Caco-2 (cell line): ENCODE measurements at regions of chr11 and their contacts with region 1.

Region 1: GRCh38 chr11:73625696-73626318 is 20.6 kb upstream of the PLEKHB1 start:
- DNase-seq: peak; percentile 86 to 92
- H3K4me3 ChIP-seq: no peak overlapping the region
- H3K4me3 Mint-ChIP-seq: peak overlapping the region; percentile 66
- H3K27ac Mint-ChIP-seq: peak overlapping the region; percentile 53
- H3K4me1 ChIP-seq: peaks cover 21% of the 10 kb centered on the region
- H3K4me1 Mint-ChIP-seq: peaks cover 24% of the 10 kb centered on the region
- H3K27me3 ChIP-seq: no peaks in the 10 kb centered on the region
- H3K27me3 Mint-ChIP-seq: peaks cover 5% of the 10 kb centered on the region
- CTCF ChIP-seq: peak; percentile 98 to 99

Region 2: DNA sequence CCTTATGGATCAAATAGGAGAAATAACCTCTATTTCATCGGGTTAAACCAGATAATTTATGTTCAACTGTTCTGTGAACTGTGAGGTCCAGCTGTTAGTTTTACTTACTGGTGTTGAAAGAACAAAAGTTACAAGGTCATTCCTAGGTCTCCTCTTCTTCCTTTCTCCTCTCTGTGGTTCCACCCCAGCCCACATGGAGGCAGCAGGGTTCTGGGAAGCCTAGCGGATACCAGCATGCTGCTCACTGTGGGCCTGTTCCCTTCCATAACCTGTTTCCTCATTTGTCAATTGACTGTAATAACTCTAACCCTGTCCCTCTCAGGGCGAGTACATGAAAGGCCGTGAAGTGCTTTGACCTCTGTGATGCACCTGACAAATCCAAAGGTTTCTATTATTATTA is 221.8 kb before region 1 on chr11:
- CTCF ChIA-PET with region 1: interaction called, 10 read pairs
- POLR2A ChIA-PET with region 1: no interaction called
- intact Hi-C with region 1: no loop called
- DNase-seq: peak; percentile 81 to 85
- H3K4me3 ChIP-seq: no peak overlapping the region
- H3K4me3 Mint-ChIP-seq: no peak overlapping the region
- H3K27ac Mint-ChIP-seq: no peak overlapping the region
- H3K4me1 ChIP-seq: no peaks in the 10 kb centered on the region
- H3K4me1 Mint-ChIP-seq: no peaks in the 10 kb centered on the region
- H3K27me3 ChIP-seq: no peaks in the 10 kb centered on the region
- H3K27me3 Mint-ChIP-seq: no peaks in the 10 kb centered on the region
- CTCF ChIP-seq: peak; percentile 71 to 93

Region 3: GRCh38 chr11:73597956-73598718 is 27.7 kb before region 1 on chr11 and contains the start of gene FAM168A:
- CTCF ChIA-PET with region 1: interaction called, 16 read pairs
- POLR2A ChIA-PET with region 1: no interaction called
- intact Hi-C with region 1: loop called (anchors 2 kb)
- DNase-seq: peak; percentile 98 to 99
- H3K4me3 ChIP-seq: peak within 1 kb of the TSS; percentile 88
- H3K4me3 Mint-ChIP-seq: peak within 1 kb of the TSS; percentile 87
- H3K27ac Mint-ChIP-seq: peak within 1 kb of the TSS; percentile 74
- H3K4me1 ChIP-seq: 0 out of 2 replicates have a peak, but pooled peaks cover 5% of the 10 kb centered on the region
- H3K4me1 Mint-ChIP-seq: peaks cover 20% of the 10 kb centered on the region
- H3K27me3 ChIP-seq: no peaks in the 10 kb centered on the region
- H3K27me3 Mint-ChIP-seq: no peaks in the 10 kb centered on the region
- CTCF ChIP-seq: peak; percentile 46 to 53
- total RNA-seq, gene FAM168A: 46.0 and 50.2 TPM in 2 replicates

Region 4: GRCh38 chr11:73661035-73661628 is 35.3 kb after region 1 on chr11:
- CTCF ChIA-PET with region 1: interaction called, 48 read pairs
- POLR2A ChIA-PET with region 1: no interaction called
- intact Hi-C with region 1: loop called (anchors 1 kb)
- DNase-seq: peak; percentile 70 to 83
- H3K4me3 ChIP-seq: no peak overlapping the region
- H3K4me3 Mint-ChIP-seq: no peak overlapping the region
- H3K27ac Mint-ChIP-seq: no peak overlapping the region
- H3K4me1 ChIP-seq: no peaks in the 10 kb centered on the region
- H3K4me1 Mint-ChIP-seq: no peaks in the 10 kb centered on the region
- H3K27me3 ChIP-seq: no peaks in the 10 kb centered on the region
- H3K27me3 Mint-ChIP-seq: no peaks in the 10 kb centered on the region
- CTCF ChIP-seq: peak; percentile 77 to 88

Region 5: GRCh38 chr11:73787643-73788537 is 162.1 kb after region 1 on chr11 and contains the start of gene MRPL48:
- CTCF ChIA-PET with region 1: interaction called, 3 read pairs
- POLR2A ChIA-PET with region 1: no interaction called
- intact Hi-C with region 1: loop called (anchors 1 kb)
- DNase-seq: peak; percentile 99
- H3K4me3 ChIP-seq: peak within 1 kb of the TSS; percentile 66
- H3K4me3 Mint-ChIP-seq: peak within 1 kb of the TSS; percentile 86
- H3K27ac Mint-ChIP-seq: peak within 1 kb of the TSS; percentile 95
- H3K4me1 ChIP-seq: peaks cover 27% of the 10 kb centered on the region
- H3K4me1 Mint-ChIP-seq: peaks cover 30% of the 10 kb centered on the region
- H3K27me3 ChIP-seq: no peaks in the 10 kb centered on the region
- H3K27me3 Mint-ChIP-seq: no peaks in the 10 kb centered on the region
- CTCF ChIP-seq: no peak
- total RNA-seq, gene MRPL48: 111 and 113 TPM in 2 replicates

Region 6: GRCh38 chr11:73931039-73931645 is 305.3 kb after region 1 on chr11:
- CTCF ChIA-PET with region 1: interaction called, 113 read pairs
- POLR2A ChIA-PET with region 1: no interaction called
- intact Hi-C with region 1: loop called (anchors 1 kb)
- DNase-seq: peak; percentile 78 to 85
- H3K4me3 ChIP-seq: no peak overlapping the region
- H3K4me3 Mint-ChIP-seq: no peak overlapping the region
- H3K27ac Mint-ChIP-seq: no peak overlapping the region
- H3K4me1 ChIP-seq: no peaks in the 10 kb centered on the region
- H3K4me1 Mint-ChIP-seq: peaks cover 8% of the 10 kb centered on the region
- H3K27me3 ChIP-seq: no peaks in the 10 kb centered on the region
- H3K27me3 Mint-ChIP-seq: no peaks in the 10 kb centered on the region
- CTCF ChIP-seq: peak; percentile 81 to 89